K562 (cell line): ENCODE measurements at regions of chr6 and their contacts with region 1.

Region 1: GRCh38 chr6:162538643-162539064 is 188.9 kb downstream of the PRKN start:
- DNase-seq: peak in 1 of 4 experiments; percentile 26
- ATAC-seq: no peak
- H3K4me3 ChIP-seq: no peak overlapping the region
- H3K27ac ChIP-seq: no peak overlapping the region
- H3K4me1 ChIP-seq: no peaks in the 10 kb centered on the region
- H3K27me3 ChIP-seq: no peaks in the 10 kb centered on the region
- CTCF ChIP-seq: no peak
- EP300 ChIP-seq: no peak
- POLR2A ChIP-seq: no peak
- RAD21 ChIP-seq: no peak

Region 2: DNA sequence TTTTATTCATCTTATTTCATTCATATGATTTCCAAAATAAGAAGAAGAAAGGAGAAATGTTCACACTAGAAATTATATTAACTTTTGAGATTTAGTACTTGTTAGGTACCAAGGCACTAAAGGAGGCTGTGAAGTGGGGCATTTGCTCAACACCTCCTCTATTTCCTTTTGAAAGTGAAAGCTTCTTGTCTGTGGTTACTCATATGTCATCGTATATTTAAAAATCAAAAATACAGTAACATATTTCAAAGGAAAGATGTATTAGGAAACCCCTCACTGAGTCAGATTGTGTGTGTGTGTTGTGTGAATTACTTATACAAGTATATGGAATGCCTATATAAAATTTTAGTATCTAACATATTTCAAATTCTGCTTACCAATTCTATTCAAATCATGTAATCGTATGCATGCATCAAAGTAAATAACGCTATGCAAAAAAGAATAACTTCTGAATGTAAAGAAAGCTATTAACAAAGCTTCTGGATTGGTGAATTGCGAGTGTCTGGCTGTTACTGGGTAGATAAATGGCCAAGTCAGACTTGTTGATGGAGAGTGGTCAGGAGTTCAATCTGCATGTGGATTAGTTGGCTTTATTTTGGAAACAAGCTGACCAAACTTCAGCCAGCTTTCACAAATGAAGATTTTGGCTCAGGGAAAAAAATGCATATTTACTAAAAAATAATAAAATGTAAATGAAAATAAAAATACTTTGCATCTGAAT is 260.1 kb after region 1 on chr6:
- CTCF ChIA-PET with region 1: no interaction called
- POLR2A ChIA-PET with region 1: no interaction called
- in situ Hi-C with region 1: no loop called
- intact Hi-C with region 1: no loop called
- DNase-seq: no peak
- ATAC-seq: no peak
- H3K4me3 ChIP-seq: no peak overlapping the region
- H3K27ac ChIP-seq: no peak overlapping the region
- H3K4me1 ChIP-seq: no peaks in the 10 kb centered on the region
- H3K27me3 ChIP-seq: no peaks in the 10 kb centered on the region
- CTCF ChIP-seq: no peak
- EP300 ChIP-seq: no peak
- POLR2A ChIP-seq: no peak
- RAD21 ChIP-seq: no peak

Region 3: GRCh38 chr6:162942866-162943265 is 404.2 kb after region 1 on chr6:
- CTCF ChIA-PET with region 1: no interaction called
- POLR2A ChIA-PET with region 1: no interaction called
- in situ Hi-C with region 1: no loop called
- intact Hi-C with region 1: loop called (anchors 10 kb)
- DNase-seq: no peak
- ATAC-seq: no peak
- H3K4me3 ChIP-seq: no peak overlapping the region
- H3K27ac ChIP-seq: no peak overlapping the region
- H3K4me1 ChIP-seq: no peaks in the 10 kb centered on the region
- H3K27me3 ChIP-seq: no peaks in the 10 kb centered on the region
- CTCF ChIP-seq: no peak
- EP300 ChIP-seq: no peak
- POLR2A ChIP-seq: no peak
- RAD21 ChIP-seq: no peak